Mucosa of descending colon (tissue), 3 donors: ENCODE measurements at regions of chr13 and their contacts with region 1.

Region 1: GRCh38 chr13:39998166-39998565 is 342.7 kb downstream of the COG6 start:
- DNase-seq: no peak
- ATAC-seq: no peak
- H3K4me3 ChIP-seq: no peak overlapping the region
- H3K4me1 ChIP-seq: no peaks in the 10 kb centered on the region
- CTCF ChIP-seq: no peak

Region 2: GRCh38 chr13:40149611-40150274 is 151.6 kb after region 1 on chr13:
- intact Hi-C with region 1: no loop called
- DNase-seq: peak in 1 of 3 donors; percentile 13
- ATAC-seq: peak; percentile 42
- H3K4me3 ChIP-seq: no peak overlapping the region
- H3K4me1 ChIP-seq: no peaks in the 10 kb centered on the region
- CTCF ChIP-seq: no peak

Region 3: GRCh38 chr13:40269086-40269485 is 270.9 kb after region 1 on chr13:
- intact Hi-C with region 1: loop called in 1 of 2 experiments (anchors 5 kb)
- DNase-seq: no peak
- ATAC-seq: peak; percentile 37
- H3K4me3 ChIP-seq: no peak overlapping the region
- H3K4me1 ChIP-seq: no peaks in the 10 kb centered on the region
- CTCF ChIP-seq: no peak